Gastrocnemius medialis (tissue), 4 donors: ENCODE measurements at regions of chr17 and their contacts with region 1.

Region 1: DNA sequence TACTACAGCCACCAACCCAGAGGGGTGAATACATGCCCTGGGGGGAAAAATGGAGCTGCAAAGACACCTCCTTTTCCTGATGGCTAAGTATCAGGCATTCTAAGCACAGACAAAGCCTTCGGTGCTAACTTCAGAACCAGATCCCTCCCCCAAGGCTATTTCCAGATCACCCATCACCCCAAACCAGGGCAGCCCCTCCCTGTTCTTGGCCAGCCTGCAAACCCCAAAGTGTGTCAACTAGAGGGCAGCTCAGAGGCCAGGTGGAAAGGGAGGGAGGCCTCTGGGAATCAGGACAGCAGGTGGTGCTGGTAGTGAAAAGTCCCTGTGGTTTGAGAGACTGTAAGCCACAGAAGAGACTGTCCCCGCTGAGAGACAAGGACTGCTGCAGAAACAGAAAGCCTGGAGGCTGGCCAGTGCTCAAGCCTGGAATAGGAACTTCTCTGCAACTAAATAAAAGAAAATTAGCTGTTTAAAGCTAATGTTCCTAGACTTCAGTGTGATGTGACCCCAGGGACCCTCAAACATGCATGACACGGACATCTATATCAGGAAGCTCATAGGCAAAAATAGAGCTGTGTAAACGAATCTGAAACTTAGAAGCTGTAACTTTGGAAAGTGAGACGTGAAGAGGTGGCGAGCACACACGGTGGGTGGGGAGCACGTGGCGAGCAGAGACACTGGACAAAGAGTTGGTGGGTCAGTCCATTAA is 9.1 kb downstream of the TUBG1 start:
- DNase-seq: peak; percentile 92 to 97
- ATAC-seq: peak; percentile 97
- H3K4me3 ChIP-seq: peak overlapping the region in 3 of 4 donors; percentile 2 to 30 (median 29)
- H3K27ac ChIP-seq: peak overlapping the region; percentile 86 to 97 (median 91)
- H3K4me1 ChIP-seq: peaks cover 26 to 31% of the 10 kb centered on the region in 2 donors
- H3K27me3 ChIP-seq: no peaks in the 10 kb centered on the region
- CTCF ChIP-seq: peak; percentile 18 to 40 (median 24)
- POLR2A ChIP-seq: peak in 1 of 2 donors; percentile 9

Region 2: DNA sequence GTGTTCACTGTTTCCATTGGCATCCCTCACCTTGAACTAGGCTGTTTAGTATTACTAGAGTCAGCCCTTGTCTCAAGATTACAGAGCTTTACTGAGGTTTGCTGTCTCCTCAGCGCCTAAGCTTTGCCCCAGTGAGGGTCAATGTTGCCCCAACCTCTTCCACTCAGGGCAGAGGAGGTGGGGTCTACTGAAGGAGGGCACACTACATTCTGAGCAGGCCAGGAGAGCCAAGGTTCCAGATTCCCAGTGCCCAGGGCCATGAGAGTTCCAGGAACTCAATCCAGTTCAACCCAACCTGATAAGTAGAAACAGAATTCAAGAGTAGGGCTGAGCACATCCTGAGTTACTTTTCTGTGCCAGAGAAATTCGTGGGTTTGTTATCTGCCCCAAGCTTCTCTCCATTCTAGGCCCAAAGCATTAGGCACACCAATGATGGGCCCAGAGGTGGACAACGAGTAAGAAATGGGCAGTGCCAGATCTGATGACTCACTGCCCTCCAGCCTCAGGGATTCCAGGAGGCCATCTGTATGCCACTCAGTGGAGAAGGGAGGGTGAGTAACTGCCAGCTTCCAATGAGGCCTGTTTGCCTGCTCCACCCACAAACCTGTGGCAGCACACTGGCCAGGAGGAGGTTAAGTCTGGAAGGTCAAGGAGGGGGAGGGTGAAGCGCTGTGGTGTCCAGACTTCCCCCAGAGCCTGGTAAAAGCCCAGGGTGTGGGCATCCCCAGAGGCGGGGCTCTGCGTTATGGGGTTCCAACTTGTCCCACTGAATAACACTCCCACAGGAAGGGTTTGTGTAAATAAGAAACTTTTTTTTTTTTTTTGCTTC is 48.7 kb after region 1 on chr17:
- in situ Hi-C with region 1: loop called in 2 of 4 experiments (anchors 10 kb)
- intact Hi-C with region 1: loop called (anchors 2 kb)
- DNase-seq: peak; percentile 76 to 90
- ATAC-seq: peak; percentile 88 to 92
- H3K4me3 ChIP-seq: no peak overlapping the region
- H3K27ac ChIP-seq: peak overlapping the region; percentile 82 to 93 (median 89)
- H3K4me1 ChIP-seq: peaks cover 31 to 33% of the 10 kb centered on the region in 2 donors
- H3K27me3 ChIP-seq: no peaks in the 10 kb centered on the region
- CTCF ChIP-seq: no peak
- POLR2A ChIP-seq: no peak